Natural killer cell (primary cell): ENCODE measurements at regions of chr1 and their contacts with region 1.

Region 1: DNA sequence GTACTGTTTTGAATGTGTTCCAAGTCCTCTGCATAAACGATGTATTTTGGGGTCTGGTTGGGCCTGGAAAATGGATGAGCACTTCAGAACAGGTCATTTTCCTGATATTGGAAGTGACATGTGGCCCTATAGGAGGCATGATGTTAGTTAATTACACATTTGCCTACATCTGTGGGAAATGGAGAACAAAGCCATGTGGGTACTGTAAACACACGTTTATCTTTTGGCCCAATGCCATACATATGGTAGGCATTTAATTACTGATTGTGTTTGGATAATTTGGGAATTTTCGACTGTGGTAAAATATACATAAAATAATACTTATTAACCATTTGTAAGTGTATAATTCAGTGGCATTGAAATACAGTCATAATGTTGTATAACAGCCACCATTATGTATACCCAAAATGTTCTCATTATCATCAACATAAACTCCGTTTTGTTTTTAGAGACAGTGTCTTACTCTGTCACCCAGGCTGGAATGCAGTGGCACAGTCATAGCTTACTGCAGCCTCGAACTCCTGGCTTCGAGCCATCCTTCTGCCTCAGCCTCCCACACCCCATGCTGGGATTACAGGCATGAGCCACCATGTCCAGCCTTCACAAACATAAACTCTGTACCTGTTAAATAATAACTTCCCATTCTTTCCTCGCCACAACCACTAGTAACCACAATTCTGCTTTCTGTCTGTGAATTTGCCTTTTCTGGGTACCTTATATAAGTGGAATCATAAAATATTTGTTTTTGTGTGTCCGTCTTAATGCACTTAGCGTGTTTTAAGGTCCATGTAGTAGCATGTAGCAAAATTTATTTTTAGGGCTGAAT is 11.9 kb upstream of the RNPEP start:
- DNase-seq: no peak
- ATAC-seq: no peak
- H3K4me3 ChIP-seq: no peak overlapping the region
- H3K4me3 Mint-ChIP-seq: no peak overlapping the region
- H3K27ac ChIP-seq: no peak overlapping the region
- H3K27ac Mint-ChIP-seq: peak overlapping the region in 1 of 2 donors; percentile 3
- H3K4me1 ChIP-seq: peaks cover 2% of the 10 kb centered on the region
- H3K4me1 Mint-ChIP-seq: peaks cover 0 to 5% of the 10 kb centered on the region in 2 donors
- H3K27me3 ChIP-seq: no peaks in the 10 kb centered on the region
- H3K27me3 Mint-ChIP-seq: peaks cover 0 to 4% of the 10 kb centered on the region in 2 donors
- CTCF ChIP-seq: no peak

Region 2: DNA sequence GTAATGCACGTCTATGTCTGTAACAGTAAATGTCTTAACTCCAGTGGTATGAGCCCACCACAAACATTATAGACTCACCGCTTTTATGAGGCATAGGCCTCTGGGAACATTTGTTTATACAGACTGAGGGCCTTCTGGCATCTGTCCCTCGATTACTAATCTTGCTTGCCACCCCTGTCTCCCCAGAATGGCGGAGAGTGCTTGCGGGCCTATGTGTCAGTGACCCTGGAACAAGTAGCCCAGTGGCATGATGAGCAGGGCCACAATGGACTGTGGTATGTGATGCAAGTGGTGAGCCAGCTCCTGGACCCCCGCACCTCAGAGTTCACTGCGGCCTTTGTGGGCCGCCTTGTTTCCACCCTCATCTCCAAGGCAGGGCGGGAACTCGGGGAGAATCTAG is 100.2 kb before region 1 on chr1:
- intact Hi-C with region 1: no loop called
- DNase-seq: no peak
- ATAC-seq: no peak
- H3K4me3 ChIP-seq: no peak overlapping the region
- H3K4me3 Mint-ChIP-seq: no peak overlapping the region
- H3K27ac ChIP-seq: no peak overlapping the region
- H3K27ac Mint-ChIP-seq: no peak overlapping the region
- H3K4me1 ChIP-seq: no peaks in the 10 kb centered on the region
- H3K4me1 Mint-ChIP-seq: no peaks in the 10 kb centered on the region
- H3K27me3 ChIP-seq: no peaks in the 10 kb centered on the region
- H3K27me3 Mint-ChIP-seq: no peaks in the 10 kb centered on the region
- CTCF ChIP-seq: no peak

Region 3: DNA sequence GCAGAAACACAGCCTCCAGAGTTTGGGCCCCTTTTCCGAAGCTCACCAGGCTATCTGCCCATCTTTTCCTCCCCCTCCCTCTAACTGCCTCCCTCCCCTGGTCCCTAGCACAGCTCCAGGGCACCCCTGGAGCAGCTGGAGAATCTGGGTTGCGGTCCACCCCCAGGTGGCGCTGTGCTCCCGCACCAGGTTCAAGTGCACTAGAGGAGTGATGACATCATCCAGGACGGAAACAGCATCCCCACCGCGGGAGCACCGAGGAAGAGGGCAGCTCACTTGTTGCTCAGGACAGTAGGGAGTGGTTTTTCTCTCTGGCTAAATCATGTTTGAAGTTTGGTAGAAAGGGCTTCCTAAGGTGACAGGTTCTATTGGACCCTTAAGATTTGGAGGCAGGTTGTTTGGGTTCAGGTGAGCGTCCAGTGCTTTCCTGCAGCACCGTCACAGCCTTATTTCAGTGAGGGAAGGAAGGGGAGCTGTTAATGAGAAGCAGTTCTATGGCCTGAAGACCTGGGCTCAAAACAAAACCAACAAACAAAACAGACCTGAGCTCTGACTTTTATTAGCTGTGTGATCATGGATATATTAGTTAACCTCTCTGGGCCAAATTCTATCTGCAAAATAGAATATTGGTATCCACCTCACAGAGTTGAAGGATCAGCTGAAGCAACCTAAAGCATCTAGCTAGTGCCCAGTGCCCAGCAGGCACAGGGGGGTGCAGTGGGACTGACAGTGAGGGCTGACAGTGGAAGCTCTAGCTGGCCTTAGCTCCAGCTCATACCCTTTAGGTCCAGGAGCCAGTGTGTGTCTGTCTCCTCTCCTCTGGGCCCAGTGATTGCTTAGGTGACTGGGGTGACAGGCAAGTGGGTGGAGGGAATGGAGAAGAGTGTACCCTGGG is 74.4 kb before region 1 on chr1:
- intact Hi-C with region 1: loop called (anchors 1 kb)
- DNase-seq: peak; percentile 76 to 89
- ATAC-seq: peak; percentile 83 to 97 (median 96)
- H3K4me3 ChIP-seq: no peak overlapping the region
- H3K4me3 Mint-ChIP-seq: peak overlapping the region; percentile 53
- H3K27ac ChIP-seq: no peak overlapping the region
- H3K27ac Mint-ChIP-seq: peak overlapping the region; percentile 36 to 80
- H3K4me1 ChIP-seq: peaks cover 5% of the 10 kb centered on the region
- H3K4me1 Mint-ChIP-seq: peaks cover 5 to 7% of the 10 kb centered on the region in 2 donors
- H3K27me3 ChIP-seq: no peaks in the 10 kb centered on the region
- H3K27me3 Mint-ChIP-seq: peaks cover 0 to 14% of the 10 kb centered on the region in 2 donors
- CTCF ChIP-seq: peak; percentile 75